Activated CD8-positive, alpha-beta T cell treated with anti-CD3 and anti-CD28 coated beads, Interleukin-2, amount 10 ng/mL, durations not matched to agents 7 days and 5 days (primary cell): ENCODE measurements at regions of chr3 and their contacts with region 1.

Region 1: DNA sequence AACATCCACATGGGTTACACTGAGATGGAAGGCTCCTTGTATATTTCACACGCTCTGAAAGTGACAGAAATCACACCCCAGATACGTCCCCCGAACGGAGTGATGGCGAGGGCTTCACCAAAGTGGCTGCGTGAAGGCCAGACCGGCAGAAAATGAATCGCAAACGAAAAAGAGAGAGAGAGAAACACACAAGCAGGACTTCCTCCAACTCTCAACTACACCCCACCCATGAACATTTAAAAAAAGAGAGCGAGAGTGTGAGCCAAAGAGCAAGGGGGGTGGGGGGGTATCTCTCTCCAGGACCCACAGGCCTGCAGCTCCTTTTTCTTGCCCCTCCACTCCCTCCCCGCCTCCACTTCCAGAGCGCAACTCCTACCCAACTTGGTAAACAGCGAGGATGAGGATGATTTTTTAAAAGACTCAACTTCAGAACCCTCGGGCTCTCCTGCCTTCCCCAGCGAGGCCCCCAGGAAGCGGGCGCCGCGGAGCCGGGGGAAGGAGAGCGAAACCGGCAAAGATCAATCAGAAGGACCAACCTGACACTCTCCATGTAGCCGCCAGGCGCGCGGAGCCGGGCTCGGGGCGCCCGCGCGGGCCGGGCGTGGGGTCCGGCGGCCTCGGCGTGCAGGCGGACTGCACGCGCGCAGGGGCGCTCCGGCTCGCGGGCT is 519.1 kb downstream of the FOXP1 start:
- DNase-seq: peak; percentile 79
- ATAC-seq: peak; percentile 57
- H3K4me3 Mint-ChIP-seq: no peak overlapping the region
- H3K27ac Mint-ChIP-seq: no peak overlapping the region
- H3K4me1 Mint-ChIP-seq: peaks cover 64% of the 10 kb centered on the region
- H3K27me3 Mint-ChIP-seq: no peaks in the 10 kb centered on the region

Region 2: GRCh38 chr3:71006810-71007785 is 57.3 kb before region 1 on chr3:
- CTCF ChIA-PET with region 1: interaction called, 22 read pairs
- POLR2A ChIA-PET with region 1: interaction called, 8 read pairs
- DNase-seq: no peak
- ATAC-seq: no peak
- H3K4me3 Mint-ChIP-seq: no peak overlapping the region
- H3K27ac Mint-ChIP-seq: no peak overlapping the region
- H3K4me1 Mint-ChIP-seq: peaks cover 56% of the 10 kb centered on the region
- H3K27me3 Mint-ChIP-seq: no peaks in the 10 kb centered on the region

Region 3: DNA sequence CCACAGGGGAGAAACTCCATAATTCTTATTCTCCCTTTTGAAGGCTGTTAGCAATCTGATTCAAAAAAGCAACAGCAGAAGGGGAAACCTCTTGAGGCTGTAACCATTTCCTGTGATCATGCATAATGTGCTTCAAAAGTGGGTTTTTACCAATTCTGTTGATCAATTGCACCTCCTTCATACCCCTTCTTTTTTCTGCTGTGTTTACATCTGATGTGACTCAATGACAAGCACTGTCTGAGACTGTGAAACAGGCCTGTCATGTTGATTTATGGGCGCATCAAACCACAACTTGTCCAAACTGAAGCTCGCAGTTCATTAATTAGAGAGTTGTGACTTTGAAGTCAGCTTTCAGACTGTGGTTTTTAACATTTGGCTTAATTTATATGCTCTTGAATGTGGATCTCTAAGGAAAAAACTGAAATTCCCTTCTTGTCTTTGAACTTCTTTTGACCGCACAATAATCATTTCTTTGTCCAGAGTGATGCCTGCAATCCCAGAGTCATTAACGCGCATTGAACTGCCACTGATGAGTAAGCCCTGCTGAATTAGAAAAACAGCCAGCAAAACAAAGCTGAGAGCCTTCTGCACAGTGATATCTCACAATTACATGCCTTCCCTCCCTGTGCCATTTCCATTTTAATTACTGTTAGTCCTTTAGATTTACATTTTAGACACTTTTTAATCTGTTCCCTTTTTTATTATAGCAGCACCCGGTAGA is 13.7 kb before region 1 on chr3:
- CTCF ChIA-PET with region 1: interaction called, 53 read pairs
- POLR2A ChIA-PET with region 1: interaction called, 38 read pairs
- DNase-seq: peak; percentile 57
- ATAC-seq: peak; percentile 89
- H3K4me3 Mint-ChIP-seq: peak overlapping the region; percentile 20
- H3K27ac Mint-ChIP-seq: peak overlapping the region; percentile 80
- H3K4me1 Mint-ChIP-seq: peaks cover 98% of the 10 kb centered on the region
- H3K27me3 Mint-ChIP-seq: no peaks in the 10 kb centered on the region

Region 4: GRCh38 chr3:71087143-71088018 is 23.0 kb after region 1 on chr3:
- CTCF ChIA-PET with region 1: interaction called, 39 read pairs
- POLR2A ChIA-PET with region 1: interaction called, 25 read pairs
- DNase-seq: peak; percentile 62
- ATAC-seq: peak; percentile 71
- H3K4me3 Mint-ChIP-seq: peak overlapping the region; percentile 37
- H3K27ac Mint-ChIP-seq: peak overlapping the region; percentile 90
- H3K4me1 Mint-ChIP-seq: peaks cover 74% of the 10 kb centered on the region
- H3K27me3 Mint-ChIP-seq: no peaks in the 10 kb centered on the region

Region 5: GRCh38 chr3:71109241-71109976 is 45.0 kb after region 1 on chr3:
- CTCF ChIA-PET with region 1: no interaction called
- POLR2A ChIA-PET with region 1: no interaction called
- DNase-seq: no peak
- ATAC-seq: peak; percentile 20
- H3K4me3 Mint-ChIP-seq: no peak overlapping the region
- H3K27ac Mint-ChIP-seq: peak overlapping the region; percentile 2
- H3K4me1 Mint-ChIP-seq: peaks cover 51% of the 10 kb centered on the region
- H3K27me3 Mint-ChIP-seq: no peaks in the 10 kb centered on the region

Region 6: DNA sequence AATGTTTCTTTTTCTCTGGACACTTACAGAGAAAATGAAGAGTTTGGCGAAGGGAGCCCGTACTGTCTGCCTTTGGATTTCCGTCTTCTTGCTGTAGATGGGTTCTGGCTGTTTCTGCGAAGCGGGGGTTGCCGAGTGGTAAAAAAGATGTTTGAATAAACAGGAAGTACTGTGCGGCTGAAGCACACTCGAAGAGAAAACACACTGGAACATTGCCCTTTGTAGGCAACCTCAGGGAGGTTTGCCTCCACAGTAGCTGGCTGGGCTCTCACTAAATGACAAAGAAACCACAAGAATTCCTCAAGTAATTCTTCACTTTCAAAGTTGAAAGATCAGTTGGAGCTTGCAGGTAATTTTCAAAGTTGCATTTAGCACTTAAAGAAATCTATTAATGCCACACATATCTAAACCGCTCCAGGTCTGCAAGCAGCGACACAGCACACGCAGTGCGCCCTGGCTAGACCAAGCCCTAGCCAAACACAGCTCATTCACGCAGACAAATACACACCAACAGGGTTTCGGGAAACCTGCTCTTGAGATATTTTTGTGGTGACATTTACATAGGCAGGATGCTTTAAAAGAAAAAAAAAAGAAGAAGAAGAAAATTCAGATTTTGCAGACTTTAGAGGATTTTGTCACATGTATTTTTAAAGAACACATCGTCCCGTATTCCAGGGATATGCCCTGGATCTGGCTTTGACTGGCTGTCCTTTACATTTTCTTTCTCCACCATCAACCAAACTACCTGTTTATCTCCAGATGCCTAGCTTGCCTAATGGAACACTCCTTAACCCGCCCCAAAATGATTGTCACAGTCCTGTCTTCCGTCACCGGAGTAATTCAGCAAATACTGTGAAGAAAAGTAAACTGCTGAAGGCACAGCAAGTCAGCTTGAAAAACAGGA is 66.3 kb after region 1 on chr3:
- CTCF ChIA-PET with region 1: interaction called, 9 read pairs
- POLR2A ChIA-PET with region 1: interaction called, 47 read pairs
- DNase-seq: peak; percentile 86
- ATAC-seq: peak; percentile 74
- H3K4me3 Mint-ChIP-seq: peak overlapping the region; percentile 98
- H3K27ac Mint-ChIP-seq: peak overlapping the region; percentile 94
- H3K4me1 Mint-ChIP-seq: peaks cover 72% of the 10 kb centered on the region
- H3K27me3 Mint-ChIP-seq: no peaks in the 10 kb centered on the region

Region 7: DNA sequence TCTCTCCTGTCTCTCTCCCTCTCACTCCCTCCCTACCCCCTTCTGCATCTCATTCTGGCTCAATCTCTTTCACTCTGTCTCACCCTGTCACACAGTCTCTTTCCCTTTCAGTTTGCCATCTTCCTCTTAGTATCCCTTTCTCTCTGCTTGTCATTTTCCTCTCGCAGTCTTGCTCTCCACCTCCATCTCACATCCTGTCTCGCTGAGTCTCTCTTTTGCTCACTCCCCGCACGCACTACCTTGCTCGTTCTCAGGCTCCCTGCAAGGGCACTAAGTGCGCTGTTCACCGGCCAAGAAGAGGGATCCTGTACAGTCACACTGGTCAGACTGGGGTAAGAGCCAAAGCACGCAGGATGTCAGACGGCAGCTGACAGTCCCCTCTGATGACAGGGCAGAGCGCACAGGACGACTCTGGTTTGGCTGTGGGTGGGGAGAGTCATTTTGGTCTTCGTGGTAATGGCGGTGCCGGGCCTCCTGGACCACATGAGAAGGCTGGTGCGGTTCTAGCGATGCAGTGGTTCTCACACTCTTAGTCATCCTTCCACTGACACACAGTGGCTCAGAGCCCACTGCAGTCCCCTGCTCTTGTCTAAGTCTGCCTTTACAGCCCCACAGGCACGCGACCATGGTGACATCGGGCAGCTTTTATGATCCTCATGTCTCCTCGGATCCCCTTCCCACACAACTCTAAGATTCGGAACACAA is 162.3 kb after region 1 on chr3:
- CTCF ChIA-PET with region 1: interaction called, 5 read pairs
- POLR2A ChIA-PET with region 1: interaction called, 10 read pairs
- DNase-seq: peak; percentile 92
- ATAC-seq: peak; percentile 92
- H3K4me3 Mint-ChIP-seq: peak overlapping the region; percentile 73
- H3K27ac Mint-ChIP-seq: peak overlapping the region; percentile 95
- H3K4me1 Mint-ChIP-seq: peaks cover 60% of the 10 kb centered on the region
- H3K27me3 Mint-ChIP-seq: no peaks in the 10 kb centered on the region

Region 8: DNA sequence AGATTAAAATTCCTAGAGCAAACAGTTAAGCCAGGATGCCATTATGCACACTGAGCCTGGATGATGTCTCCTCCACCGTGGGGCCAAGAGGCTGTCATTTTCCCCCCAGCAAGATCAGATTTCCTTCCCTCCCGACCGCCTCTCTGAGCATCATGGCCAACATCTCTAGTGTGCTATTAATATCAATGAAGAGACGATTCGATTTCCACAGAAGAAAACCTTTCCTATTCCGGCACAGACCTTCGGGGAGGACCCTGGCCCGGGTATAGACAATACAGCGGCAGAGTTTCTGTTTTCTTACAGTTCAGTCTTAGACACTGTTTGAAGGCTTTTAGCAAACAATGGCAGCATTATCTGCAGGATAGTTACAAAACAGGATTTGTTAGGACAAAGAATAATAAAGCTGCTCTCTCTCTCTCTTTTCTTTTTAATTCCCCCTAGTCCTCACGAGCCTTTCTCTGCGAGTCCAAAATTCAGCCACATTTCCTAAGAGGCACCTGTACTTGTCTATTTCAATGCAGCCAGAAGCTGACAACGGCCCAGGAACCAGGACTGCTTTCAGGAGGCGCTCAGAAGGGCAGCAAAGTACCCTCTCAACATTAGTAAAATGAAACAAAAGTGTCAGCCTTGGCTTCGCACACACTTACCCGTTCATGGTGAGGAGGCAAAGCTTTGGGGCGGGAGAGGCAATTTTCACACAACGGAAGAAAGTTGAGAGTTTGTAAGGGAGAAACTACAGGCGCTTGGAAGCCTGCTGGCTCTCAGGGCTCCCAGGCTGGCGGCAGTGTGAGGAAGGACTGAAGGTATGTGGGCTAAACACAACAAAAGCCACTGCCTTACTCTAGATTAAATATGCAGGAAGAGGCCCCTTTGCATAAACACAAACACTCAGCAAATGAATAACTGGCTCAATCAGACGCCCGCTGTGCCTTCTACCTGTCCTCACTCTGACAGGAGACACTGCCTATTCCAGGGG is 241.1 kb after region 1 on chr3:
- CTCF ChIA-PET with region 1: interaction called, 8 read pairs
- POLR2A ChIA-PET with region 1: interaction called, 10 read pairs
- DNase-seq: peak; percentile 46
- ATAC-seq: peak; percentile 38
- H3K4me3 Mint-ChIP-seq: peak overlapping the region; percentile 89
- H3K27ac Mint-ChIP-seq: peak overlapping the region; percentile 92
- H3K4me1 Mint-ChIP-seq: peaks cover 80% of the 10 kb centered on the region
- H3K27me3 Mint-ChIP-seq: no peaks in the 10 kb centered on the region